ENCODE measurements at regions of chr2 and their contacts with region 1.

Region 1: DNA sequence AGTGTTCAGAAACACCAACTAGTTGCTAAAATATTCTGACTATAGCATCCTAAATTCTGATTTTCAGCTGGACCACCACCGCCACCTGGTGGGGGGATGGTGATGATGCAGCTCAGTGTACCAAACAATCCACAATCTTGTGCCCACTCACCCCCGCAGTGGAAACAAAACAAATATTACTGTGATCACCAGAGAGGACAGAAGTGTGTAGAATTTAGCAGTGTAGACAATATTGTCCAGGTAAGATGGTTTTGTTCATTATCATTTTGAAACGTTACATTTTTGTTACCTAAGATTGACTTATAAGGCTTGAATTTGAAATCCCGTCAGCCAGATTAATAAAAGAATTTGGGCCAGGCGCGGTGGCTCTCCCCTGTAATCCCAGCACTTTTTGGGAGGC is 31.7 kb upstream of the UBXN4 start:
- DNase-seq: peak; percentile 13 to 78 (median 67)
- ATAC-seq: peak; percentile 63 to 75 (median 68)
- H3K4me3 ChIP-seq: no peak overlapping the region
- H3K4me3 Mint-ChIP-seq: no peak overlapping the region
- H3K27ac ChIP-seq: no peak overlapping the region
- H3K27ac Mint-ChIP-seq: no peak overlapping the region
- H3K4me1 ChIP-seq: no peaks in the 10 kb centered on the region
- H3K4me1 Mint-ChIP-seq: no peaks in the 10 kb centered on the region
- H3K27me3 ChIP-seq: no peaks in the 10 kb centered on the region
- H3K27me3 Mint-ChIP-seq: no peaks in the 10 kb centered on the region

Region 2: DNA sequence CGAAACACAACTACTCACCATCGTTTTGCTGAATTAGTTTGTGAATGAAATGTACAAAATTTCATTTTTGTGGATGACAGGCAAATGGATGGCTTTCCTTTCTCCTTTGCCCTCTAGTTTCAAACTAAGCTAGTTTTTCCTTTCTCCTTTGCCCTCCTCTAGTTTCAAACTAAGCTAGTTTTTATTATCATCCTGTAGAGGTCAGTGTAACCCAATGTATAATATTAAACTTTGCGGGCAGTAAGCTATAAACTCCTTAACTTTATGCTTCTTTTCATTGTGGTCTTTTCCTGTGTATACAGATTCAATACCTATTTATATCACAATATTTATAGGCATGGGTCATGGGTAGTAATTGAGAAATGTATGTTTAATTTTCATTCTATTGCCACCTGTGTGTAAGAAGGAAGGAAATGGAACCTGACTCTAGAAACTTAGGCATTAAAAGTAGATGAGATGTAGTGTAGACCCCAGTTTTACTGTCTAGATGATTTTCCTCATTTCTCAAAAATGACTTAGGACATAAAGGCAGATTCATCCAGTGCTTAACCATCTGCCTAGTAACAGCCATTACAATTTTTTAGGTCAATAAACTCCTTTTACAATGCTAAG is 720.9 kb before region 1 on chr2:
- CTCF ChIA-PET with region 1: interaction called, 8 to 36 read pairs
- POLR2A ChIA-PET with region 1: no interaction called
- DNase-seq: peak in 1 of 35 experiments; percentile 49
- ATAC-seq: peak in 1 of 4 experiments; percentile 46
- H3K4me3 ChIP-seq: no peak overlapping the region
- H3K4me3 Mint-ChIP-seq: no peak overlapping the region
- H3K27ac ChIP-seq: no peak overlapping the region
- H3K27ac Mint-ChIP-seq: no peak overlapping the region
- H3K4me1 ChIP-seq: no peaks in the 10 kb centered on the region
- H3K4me1 Mint-ChIP-seq: no peaks in the 10 kb centered on the region
- H3K27me3 ChIP-seq: peaks cover 0 to 10% of the 10 kb centered on the region in 2 experiments
- H3K27me3 Mint-ChIP-seq: peaks cover 0 to 8% of the 10 kb centered on the region in 2 donors

Region 3: DNA sequence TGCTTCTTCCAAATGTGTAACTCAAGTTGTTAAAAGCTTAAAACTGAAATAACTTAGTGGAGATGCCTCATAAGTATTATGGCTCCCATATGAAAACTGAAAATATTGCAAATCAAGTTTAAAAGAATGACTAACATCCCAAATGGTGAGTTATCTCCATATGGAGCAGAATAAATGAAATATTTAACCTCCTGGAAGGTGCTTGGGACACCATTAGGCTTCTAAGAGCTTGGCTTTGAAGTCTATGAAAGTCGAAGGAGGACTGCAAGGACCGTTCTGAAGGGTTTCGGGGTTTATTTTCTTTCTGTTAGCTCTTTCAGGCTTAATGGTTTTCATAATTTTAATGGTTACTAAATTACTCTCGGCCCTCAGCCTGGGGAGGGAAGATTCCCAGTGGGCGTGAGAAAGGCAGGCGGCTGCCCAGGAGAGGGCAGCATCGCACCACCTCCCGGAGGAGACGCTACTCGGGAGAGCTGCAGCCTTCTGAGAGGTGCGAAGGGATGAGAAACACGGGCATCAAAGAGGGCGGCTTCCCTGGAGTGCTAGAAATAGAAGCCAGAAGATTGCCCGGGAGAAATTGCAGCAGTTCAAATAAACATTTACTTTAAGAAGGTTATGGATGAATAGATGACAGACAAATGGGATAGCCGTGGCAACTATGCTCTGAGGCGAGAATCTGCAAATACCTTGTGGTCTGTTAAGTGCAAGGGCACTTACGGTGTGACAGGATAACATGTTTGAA is 705.8 kb before region 1 on chr2:
- CTCF ChIA-PET with region 1: interaction called, 29 to 126 read pairs
- POLR2A ChIA-PET with region 1: no interaction called
- DNase-seq: peak; percentile 25 to 79 (median 56)
- ATAC-seq: peak; percentile 87 to 92 (median 90)
- H3K4me3 ChIP-seq: no peak overlapping the region
- H3K4me3 Mint-ChIP-seq: no peak overlapping the region
- H3K27ac ChIP-seq: no peak overlapping the region
- H3K27ac Mint-ChIP-seq: peak overlapping the region in 1 of 2 donors; percentile 55
- H3K4me1 ChIP-seq: peaks cover 0 to 5% of the 10 kb centered on the region in 2 experiments
- H3K4me1 Mint-ChIP-seq: peaks cover 4 to 7% (median 6%) of the 10 kb centered on the region in 3 donors
- H3K27me3 ChIP-seq: peaks cover 3 to 17% of the 10 kb centered on the region in 2 experiments
- H3K27me3 Mint-ChIP-seq: peaks cover 5 to 21% of the 10 kb centered on the region in 2 donors

Region 4: GRCh38 chr2:135473567-135473966 is 236.4 kb before region 1 on chr2:
- CTCF ChIA-PET with region 1: interaction called, 13 to 29 read pairs
- POLR2A ChIA-PET with region 1: no interaction called
- DNase-seq: peak in 23 of 35 experiments; percentile 2 to 58 (median 16)
- ATAC-seq: no peak
- H3K4me3 ChIP-seq: no peak overlapping the region
- H3K4me3 Mint-ChIP-seq: no peak overlapping the region
- H3K27ac ChIP-seq: no peak overlapping the region
- H3K27ac Mint-ChIP-seq: no peak overlapping the region
- H3K4me1 ChIP-seq: no peaks in the 10 kb centered on the region
- H3K4me1 Mint-ChIP-seq: no peaks in the 10 kb centered on the region
- H3K27me3 ChIP-seq: no peaks in the 10 kb centered on the region
- H3K27me3 Mint-ChIP-seq: no peaks in the 10 kb centered on the region